Dendritic cell treated with granulocyte-macrophage colony-stimulating factor and Interleukin-4, amounts not matched to agents 40 ng/mL and 50 ng/mL, for 4 days (primary cell): ENCODE measurements at regions of chr2 and their contacts with region 1.

Region 1: DNA sequence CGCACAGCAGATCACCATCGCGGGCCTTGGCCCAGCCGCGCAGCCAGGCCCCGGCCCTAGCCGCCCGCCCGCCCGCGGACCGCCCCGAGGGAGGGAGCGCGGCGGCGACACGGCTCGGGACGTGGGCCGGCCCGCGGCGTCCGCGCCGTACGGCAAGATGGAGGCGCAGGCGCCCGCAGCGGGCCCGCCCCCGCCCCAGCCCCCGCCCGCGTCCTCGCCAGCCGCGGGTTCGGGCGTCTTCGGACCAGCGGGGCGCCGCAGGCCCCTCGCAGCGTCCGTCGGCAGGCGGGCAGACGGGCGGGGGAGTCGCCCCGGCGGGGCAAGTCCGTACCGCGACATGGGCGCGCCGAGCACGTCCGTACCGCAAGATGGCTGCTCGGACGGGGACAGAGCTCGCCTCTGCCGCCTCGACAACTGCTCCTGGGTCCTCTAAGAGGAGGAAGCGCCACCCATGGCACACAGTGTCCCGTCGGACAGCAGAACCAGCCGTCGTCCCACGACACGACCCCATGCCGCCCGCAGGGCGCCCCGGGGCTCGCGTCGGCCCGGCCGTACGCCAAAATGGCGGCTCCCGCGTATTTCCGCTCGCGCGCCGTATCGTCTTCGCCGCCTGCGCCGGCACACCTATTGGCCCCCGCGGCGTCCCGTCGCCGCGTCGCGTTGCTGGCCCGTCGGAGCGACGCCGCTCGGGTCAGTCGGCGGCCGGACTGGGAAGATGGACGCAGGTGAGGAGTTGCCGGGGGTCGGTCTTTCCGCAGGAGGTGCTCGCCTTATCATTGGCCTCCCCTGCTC is at the starts of genes ATG4B and THAP4:
- H3K4me3 Mint-ChIP-seq: peak within 1 kb of the TSS; percentile 84
- H3K27ac Mint-ChIP-seq: peak within 1 kb of the TSS; percentile 85
- H3K4me1 Mint-ChIP-seq: peaks cover 63% of the 10 kb centered on the region
- H3K27me3 Mint-ChIP-seq: no peaks in the 10 kb centered on the region

Region 2: GRCh38 chr2:241217320-241218031 is 419.7 kb before region 1 on chr2:
- intact Hi-C with region 1: no loop called
- H3K4me3 Mint-ChIP-seq: peak overlapping the region; percentile 75
- H3K27ac Mint-ChIP-seq: no peak overlapping the region
- H3K4me1 Mint-ChIP-seq: peaks cover 7% of the 10 kb centered on the region
- H3K27me3 Mint-ChIP-seq: peaks cover 56% of the 10 kb centered on the region

Region 3: DNA sequence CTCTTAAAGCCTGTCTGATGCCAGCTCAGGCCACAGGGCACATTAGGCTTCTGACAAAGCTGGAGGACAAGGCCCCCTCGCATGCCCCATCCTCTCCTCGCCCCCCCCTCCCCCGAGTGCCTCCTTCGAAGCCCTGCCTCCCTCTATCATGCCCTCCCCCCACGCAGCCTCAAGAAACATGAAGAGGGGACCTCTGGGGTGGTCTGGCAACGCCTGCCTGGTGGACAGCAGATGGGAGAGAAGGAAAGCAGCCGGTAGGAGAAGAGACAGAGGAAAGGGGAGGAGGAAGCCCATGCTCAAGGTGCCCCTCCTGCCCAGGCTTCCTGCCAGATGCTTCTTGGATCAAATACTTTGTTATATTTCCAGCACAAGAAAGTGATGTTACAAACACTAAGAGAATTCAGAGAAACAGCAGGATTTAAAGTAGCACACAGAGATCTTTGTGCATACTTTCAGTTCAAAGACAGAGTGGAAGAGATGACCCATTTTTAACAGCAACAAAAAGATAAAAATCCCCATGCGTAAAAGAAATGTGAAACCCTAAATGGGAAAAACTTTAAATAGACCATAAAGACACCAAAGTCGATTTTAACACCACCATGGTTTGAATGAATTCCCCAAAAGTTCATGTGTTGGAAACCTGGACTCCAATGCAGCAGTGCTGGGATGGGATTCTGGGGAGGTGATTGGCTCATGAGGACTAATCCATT is 59.6 kb before region 1 on chr2:
- intact Hi-C with region 1: no loop called
- H3K4me3 Mint-ChIP-seq: no peak overlapping the region
- H3K27ac Mint-ChIP-seq: no peak overlapping the region
- H3K4me1 Mint-ChIP-seq: no peaks in the 10 kb centered on the region
- H3K27me3 Mint-ChIP-seq: no peaks in the 10 kb centered on the region

Region 4: GRCh38 chr2:241617431-241618154 is 19.6 kb before region 1 on chr2:
- intact Hi-C with region 1: loop called (anchors 2 kb)
- H3K4me3 Mint-ChIP-seq: peak overlapping the region; percentile 65
- H3K27ac Mint-ChIP-seq: peak overlapping the region; percentile 54
- H3K4me1 Mint-ChIP-seq: peaks cover 40% of the 10 kb centered on the region
- H3K27me3 Mint-ChIP-seq: no peaks in the 10 kb centered on the region

Region 5: GRCh38 chr2:241702132-241703031 is 65.2 kb after region 1 on chr2:
- intact Hi-C with region 1: loop called (anchors 1 kb)
- H3K4me3 Mint-ChIP-seq: peak overlapping the region; percentile 78
- H3K27ac Mint-ChIP-seq: peak overlapping the region; percentile 81
- H3K4me1 Mint-ChIP-seq: peaks cover 18% of the 10 kb centered on the region
- H3K27me3 Mint-ChIP-seq: no peaks in the 10 kb centered on the region